CD8-positive, alpha-beta memory T cell (primary cell): ENCODE measurements at regions of chr17 and their contacts with region 1.

Region 1: DNA sequence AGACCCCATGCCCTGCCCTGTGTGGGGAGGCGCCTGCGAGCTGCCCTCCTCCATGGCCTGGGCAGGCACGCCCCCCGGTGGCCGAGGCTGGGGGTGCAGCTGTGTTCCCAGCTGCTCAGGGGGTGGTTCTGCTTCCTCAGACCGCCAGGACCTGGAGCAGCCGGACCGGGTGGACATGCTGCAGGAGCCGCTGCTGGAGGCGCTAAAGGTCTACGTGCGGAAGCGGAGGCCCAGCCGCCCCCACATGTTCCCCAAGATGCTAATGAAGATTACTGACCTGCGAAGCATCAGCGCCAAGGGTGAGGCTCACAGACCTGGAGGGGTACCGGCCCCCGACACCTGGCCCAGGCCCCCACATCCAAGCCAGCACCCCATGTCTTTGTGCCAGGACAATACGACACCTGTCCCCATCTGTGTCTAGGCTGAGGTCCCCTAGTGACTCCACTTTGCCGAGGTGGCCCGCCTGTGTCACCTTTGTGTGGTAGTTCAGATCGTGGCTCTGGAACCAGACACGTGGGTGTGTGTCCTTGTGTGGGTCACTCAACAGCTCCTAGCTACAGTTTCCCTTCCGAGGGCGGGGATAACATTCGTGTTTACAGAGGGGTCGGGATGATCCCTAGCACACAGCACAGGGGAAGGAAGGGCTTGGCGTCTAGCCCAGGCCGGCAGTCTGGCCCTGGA is 9.3 kb downstream of the GJD3 start:
- DNase-seq: peak; percentile 63 to 82 (median 71)
- H3K4me3 ChIP-seq: no peak overlapping the region
- H3K4me3 Mint-ChIP-seq: peak overlapping the region in 1 of 7 donors; percentile 32
- H3K27ac ChIP-seq: no peak overlapping the region
- H3K27ac Mint-ChIP-seq: peak overlapping the region in 6 of 8 donors; percentile 19 to 75 (median 41)
- H3K4me1 ChIP-seq: no peaks in the 10 kb centered on the region
- H3K4me1 Mint-ChIP-seq: peaks cover 14 to 20% (median 17%) of the 10 kb centered on the region in 3 donors
- H3K27me3 ChIP-seq: no peaks in the 10 kb centered on the region
- H3K27me3 Mint-ChIP-seq: peaks cover 0 to 4% of the 10 kb centered on the region in 2 donors

Region 2: DNA sequence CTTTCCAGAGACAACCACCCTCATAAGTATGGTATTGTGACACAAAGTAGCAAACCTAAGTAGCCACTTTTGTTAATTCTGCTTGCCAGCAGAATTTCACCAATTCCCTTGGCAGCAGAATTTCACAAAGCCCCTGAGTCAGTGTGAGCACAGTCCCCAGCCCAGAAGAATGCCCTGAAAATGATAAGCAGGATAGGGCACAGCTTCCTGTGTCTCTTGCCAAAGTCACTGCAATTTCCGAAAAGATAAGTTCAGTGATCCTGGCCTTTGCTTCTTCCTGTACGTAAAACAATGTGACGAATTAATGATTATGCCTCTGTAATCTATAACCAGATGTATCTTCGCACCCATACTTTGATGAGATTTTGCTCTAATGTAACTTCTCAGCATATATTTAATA is 152.1 kb before region 1 on chr17:
- CTCF ChIA-PET with region 1: interaction called, 20 read pairs
- POLR2A ChIA-PET with region 1: no interaction called
- DNase-seq: no peak
- H3K4me3 ChIP-seq: no peak overlapping the region
- H3K4me3 Mint-ChIP-seq: no peak overlapping the region
- H3K27ac ChIP-seq: no peak overlapping the region
- H3K27ac Mint-ChIP-seq: no peak overlapping the region
- H3K4me1 ChIP-seq: no peaks in the 10 kb centered on the region
- H3K4me1 Mint-ChIP-seq: peaks cover 0 to 5% (median 3%) of the 10 kb centered on the region in 3 donors
- H3K27me3 ChIP-seq: no peaks in the 10 kb centered on the region
- H3K27me3 Mint-ChIP-seq: peaks cover 7 to 9% of the 10 kb centered on the region in 2 donors

Region 3: DNA sequence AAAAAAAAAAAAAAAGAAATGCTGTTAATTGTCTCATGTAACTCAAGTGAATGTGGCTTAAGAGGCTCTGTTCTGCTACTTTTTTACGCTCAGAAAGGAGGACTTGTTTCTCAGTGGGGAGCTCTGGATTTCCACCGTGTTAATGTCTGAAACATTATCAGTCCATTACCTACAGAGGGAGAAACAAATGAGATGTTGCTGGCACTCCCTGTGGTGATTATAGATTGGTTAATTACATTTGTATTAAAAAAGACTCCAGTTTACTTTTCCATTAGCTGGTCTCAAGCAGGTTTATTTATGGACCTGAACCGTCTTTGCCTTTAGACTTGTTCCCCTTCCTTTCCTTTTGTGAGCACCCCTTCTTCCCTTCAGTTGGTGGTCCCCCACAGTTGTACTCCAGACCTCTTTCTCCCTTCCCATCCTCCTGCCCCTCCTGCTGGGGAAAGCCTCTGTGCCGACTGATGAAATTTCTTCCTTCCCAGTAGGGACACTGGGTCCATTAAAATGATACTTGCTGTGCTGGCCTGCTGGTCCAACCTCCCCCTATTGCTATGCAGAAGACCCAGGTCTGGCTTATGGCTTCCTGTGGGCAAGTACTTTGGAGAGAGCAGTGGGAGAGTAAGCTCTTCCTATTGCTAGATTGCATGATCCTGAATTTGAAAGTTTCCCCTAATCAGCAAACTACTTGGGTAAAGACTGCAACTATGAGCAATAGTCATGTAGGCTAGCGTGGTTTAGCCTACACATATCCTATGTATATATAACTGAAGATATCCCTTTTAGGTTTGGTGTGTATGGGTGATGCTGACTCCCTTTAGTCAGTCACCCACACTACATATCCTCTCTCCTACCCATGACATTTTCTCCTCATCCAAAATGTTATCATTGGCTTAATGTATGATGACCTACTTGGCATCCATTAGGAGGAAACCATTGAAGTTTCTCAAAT is 59.5 kb before region 1 on chr17:
- CTCF ChIA-PET with region 1: interaction called, 365 read pairs
- POLR2A ChIA-PET with region 1: no interaction called
- DNase-seq: no peak
- H3K4me3 ChIP-seq: no peak overlapping the region
- H3K4me3 Mint-ChIP-seq: no peak overlapping the region
- H3K27ac ChIP-seq: no peak overlapping the region
- H3K27ac Mint-ChIP-seq: peak overlapping the region in 1 of 8 donors; percentile 82
- H3K4me1 ChIP-seq: no peaks in the 10 kb centered on the region
- H3K4me1 Mint-ChIP-seq: no peaks in the 10 kb centered on the region
- H3K27me3 ChIP-seq: no peaks in the 10 kb centered on the region
- H3K27me3 Mint-ChIP-seq: no peaks in the 10 kb centered on the region

Region 4: GRCh38 chr17:40323391-40324381 is 31.6 kb before region 1 on chr17:
- CTCF ChIA-PET with region 1: interaction called, 46 read pairs
- POLR2A ChIA-PET with region 1: interaction called, 3 read pairs
- DNase-seq: peak; percentile 77 to 93 (median 89)
- H3K4me3 ChIP-seq: peak overlapping the region; percentile 92
- H3K4me3 Mint-ChIP-seq: peak overlapping the region; percentile 86 to 98 (median 98)
- H3K27ac ChIP-seq: peak overlapping the region; percentile 100
- H3K27ac Mint-ChIP-seq: peak overlapping the region; percentile 98 to 100 (median 100)
- H3K4me1 ChIP-seq: peaks cover 91% of the 10 kb centered on the region
- H3K4me1 Mint-ChIP-seq: peaks cover 92 to 97% (median 96%) of the 10 kb centered on the region in 3 donors
- H3K27me3 ChIP-seq: no peaks in the 10 kb centered on the region
- H3K27me3 Mint-ChIP-seq: peaks cover 0 to 8% of the 10 kb centered on the region in 2 donors

Region 5: DNA sequence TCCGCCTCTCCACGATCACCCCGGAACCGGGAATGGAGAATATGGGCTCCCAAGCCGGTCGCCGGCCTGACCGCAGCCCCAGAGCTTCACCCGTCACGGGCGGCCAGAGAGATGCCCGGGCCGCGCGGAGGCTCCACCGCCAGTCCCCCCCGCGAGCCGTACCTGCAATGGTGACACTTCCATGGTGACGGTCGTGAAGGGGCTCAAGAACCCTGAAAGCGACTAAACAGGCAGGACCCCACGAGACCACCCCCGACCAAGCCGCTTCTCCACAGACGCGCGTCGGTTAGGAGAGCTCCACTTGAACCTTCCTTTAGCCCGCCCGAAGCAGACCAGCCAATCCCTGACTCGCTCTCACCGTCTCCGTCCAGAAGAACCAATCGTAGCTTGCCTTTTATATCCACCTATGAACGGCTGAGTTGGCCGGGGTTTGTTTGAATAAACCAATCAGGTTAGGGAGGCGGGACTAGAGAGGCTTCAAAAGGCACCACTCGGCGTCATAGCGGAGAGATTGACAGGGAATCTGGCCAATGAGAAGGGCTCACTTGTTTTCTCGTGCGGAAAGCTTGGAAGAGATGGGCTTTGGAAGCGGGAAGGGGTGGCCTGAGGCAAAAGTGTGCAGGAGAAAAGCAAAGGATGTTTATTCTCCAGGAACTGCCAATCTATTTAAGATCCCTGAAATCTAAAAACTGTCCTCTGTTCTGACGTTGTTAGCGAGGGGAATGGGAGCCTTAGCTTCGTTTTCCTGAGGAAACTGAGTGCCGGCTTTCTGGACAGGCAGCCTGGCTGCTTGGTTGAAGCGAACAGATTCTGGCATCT is 62.6 kb after region 1 on chr17 and contains the start of gene TOP2A:
- CTCF ChIA-PET with region 1: interaction called, 15 read pairs
- POLR2A ChIA-PET with region 1: no interaction called
- DNase-seq: peak; percentile 84 to 98 (median 97)
- H3K4me3 ChIP-seq: peak within 1 kb of the TSS; percentile 98
- H3K4me3 Mint-ChIP-seq: peak within 1 kb of the TSS; percentile 86 to 96 (median 94)
- H3K27ac ChIP-seq: peak within 1 kb of the TSS; percentile 81
- H3K27ac Mint-ChIP-seq: peak within 1 kb of the TSS; percentile 59 to 93 (median 84)
- H3K4me1 ChIP-seq: peaks cover 10% of the 10 kb centered on the region
- H3K4me1 Mint-ChIP-seq: peaks cover 17 to 29% (median 23%) of the 10 kb centered on the region in 3 donors
- H3K27me3 ChIP-seq: no peaks in the 10 kb centered on the region
- H3K27me3 Mint-ChIP-seq: peaks cover 4 to 5% of the 10 kb centered on the region in 2 donors
- total RNA-seq, gene TOP2A: 138 to 143 TPM